T-cell (primary cell): ENCODE measurements at regions of chr3 and their contacts with region 1.

Region 1: GRCh38 chr3:196254376-196255283 is 32.9 kb downstream of the PCYT1A start:
- DNase-seq: no peak
- ATAC-seq: no peak
- H3K4me3 ChIP-seq: no peak overlapping the region
- H3K4me3 Mint-ChIP-seq: no peak overlapping the region
- H3K27ac ChIP-seq: no peak overlapping the region
- H3K27ac Mint-ChIP-seq: peak overlapping the region; percentile 0 to 10
- H3K4me1 ChIP-seq: peaks cover 0 to 3% of the 10 kb centered on the region in 2 experiments
- H3K4me1 Mint-ChIP-seq: peaks cover 3 to 15% (median 4%) of the 10 kb centered on the region in 3 donors
- H3K27me3 ChIP-seq: no peaks in the 10 kb centered on the region
- H3K27me3 Mint-ChIP-seq: no peaks in the 10 kb centered on the region

Region 2: DNA sequence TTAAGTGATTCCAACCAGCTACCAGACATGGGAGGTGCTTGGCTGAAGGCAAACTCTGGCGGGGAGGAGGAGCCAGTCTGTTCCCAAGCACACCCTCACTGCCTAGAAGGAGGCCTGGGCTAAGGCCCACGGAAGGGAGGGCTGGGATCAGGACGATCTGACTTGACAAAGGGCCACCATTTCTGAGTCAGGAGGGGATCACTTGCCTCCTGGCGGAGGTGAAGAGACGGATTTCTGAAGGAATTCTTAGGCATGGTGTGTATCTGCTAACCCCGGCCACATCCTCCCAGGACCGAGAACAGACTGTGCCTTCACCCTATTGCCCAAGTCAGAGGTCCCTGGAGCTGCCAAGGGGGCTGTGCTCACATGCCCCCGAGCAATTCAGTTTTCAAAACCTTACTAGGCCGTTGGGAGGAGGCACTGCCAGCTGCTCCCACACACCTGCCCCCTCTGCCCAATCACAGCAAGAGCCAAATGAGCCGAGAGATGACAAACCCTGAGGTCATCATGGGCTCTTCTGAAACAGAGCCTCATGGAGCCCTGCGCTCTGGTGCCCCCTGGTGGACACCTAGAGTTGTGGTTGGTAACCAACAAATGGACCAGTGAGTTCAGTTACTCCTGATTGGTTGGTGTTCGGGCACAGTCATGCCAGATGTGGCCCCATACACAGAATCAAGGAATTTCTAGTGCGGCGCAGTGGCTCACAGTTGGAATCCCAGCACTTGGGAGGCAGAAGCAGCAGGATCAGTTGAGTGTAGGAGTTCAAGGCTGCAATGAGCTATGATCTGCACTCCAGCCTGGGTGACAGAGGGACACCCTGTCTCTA is 339.8 kb before region 1 on chr3:
- CTCF ChIA-PET with region 1: no interaction called
- POLR2A ChIA-PET with region 1: no interaction called
- DNase-seq: peak; percentile 81 to 95 (median 89)
- ATAC-seq: peak; percentile 93 to 97 (median 96)
- H3K4me3 ChIP-seq: no peak overlapping the region
- H3K4me3 Mint-ChIP-seq: no peak overlapping the region
- H3K27ac ChIP-seq: peak overlapping the region; percentile 20
- H3K27ac Mint-ChIP-seq: peak overlapping the region in 1 of 2 donors; percentile 57
- H3K4me1 ChIP-seq: peaks cover 6 to 16% of the 10 kb centered on the region in 2 experiments
- H3K4me1 Mint-ChIP-seq: peaks cover 14 to 17% (median 15%) of the 10 kb centered on the region in 3 donors
- H3K27me3 ChIP-seq: peaks cover 0 to 11% of the 10 kb centered on the region in 2 experiments
- H3K27me3 Mint-ChIP-seq: peaks cover 0 to 15% of the 10 kb centered on the region in 2 donors

Region 3: DNA sequence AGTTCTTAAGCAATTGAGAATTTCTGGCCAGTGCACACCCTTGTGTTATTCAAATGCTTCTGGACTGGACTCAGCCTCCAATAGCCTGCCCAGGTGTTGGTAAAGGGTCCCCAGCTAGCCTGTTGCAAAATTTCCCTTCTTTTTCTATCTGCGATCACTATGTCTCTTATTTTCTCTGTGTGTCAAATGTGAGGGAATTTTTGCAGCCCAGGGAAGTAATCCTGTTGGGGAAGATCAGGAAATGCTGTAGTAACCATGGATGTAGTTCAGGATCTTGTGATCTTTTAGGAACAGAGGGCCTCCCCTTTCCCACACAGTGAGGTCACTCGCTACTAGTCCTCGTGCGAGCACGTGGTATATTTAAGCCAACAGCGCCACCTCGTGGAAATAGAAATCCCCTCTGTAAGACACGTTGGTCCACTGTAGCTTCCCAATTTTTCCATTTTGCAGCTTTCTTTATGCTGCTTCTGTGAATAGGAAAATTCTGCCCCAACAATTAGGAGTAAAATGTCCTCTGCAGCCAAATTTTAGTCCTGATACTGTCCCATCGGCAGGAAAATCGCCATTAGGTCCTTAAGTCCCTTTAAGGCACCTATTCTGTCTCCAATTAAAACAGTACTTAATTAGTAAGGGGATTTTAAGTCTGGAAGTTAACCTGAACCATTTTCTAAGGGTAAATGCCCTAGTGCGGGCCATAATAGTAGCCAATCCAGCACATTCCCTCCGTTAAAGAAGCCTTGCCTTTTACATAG is 264.5 kb after region 1 on chr3:
- CTCF ChIA-PET with region 1: interaction called in 1 of 2 experiments, 10 read pairs
- POLR2A ChIA-PET with region 1: no interaction called
- DNase-seq: peak in 26 of 35 experiments; percentile 14 to 78 (median 40)
- ATAC-seq: peak in 2 of 4 experiments; percentile 57 to 58
- H3K4me3 ChIP-seq: no peak overlapping the region
- H3K4me3 Mint-ChIP-seq: no peak overlapping the region
- H3K27ac ChIP-seq: no peak overlapping the region
- H3K27ac Mint-ChIP-seq: no peak overlapping the region
- H3K4me1 ChIP-seq: no peaks in the 10 kb centered on the region
- H3K4me1 Mint-ChIP-seq: no peaks in the 10 kb centered on the region
- H3K27me3 ChIP-seq: peaks cover 0 to 8% of the 10 kb centered on the region in 2 experiments
- H3K27me3 Mint-ChIP-seq: peaks cover 0 to 4% of the 10 kb centered on the region in 2 donors